Endothelial cell of umbilical vein (primary cell): ENCODE measurements at regions of chr14 and their contacts with region 1.

Region 1: DNA sequence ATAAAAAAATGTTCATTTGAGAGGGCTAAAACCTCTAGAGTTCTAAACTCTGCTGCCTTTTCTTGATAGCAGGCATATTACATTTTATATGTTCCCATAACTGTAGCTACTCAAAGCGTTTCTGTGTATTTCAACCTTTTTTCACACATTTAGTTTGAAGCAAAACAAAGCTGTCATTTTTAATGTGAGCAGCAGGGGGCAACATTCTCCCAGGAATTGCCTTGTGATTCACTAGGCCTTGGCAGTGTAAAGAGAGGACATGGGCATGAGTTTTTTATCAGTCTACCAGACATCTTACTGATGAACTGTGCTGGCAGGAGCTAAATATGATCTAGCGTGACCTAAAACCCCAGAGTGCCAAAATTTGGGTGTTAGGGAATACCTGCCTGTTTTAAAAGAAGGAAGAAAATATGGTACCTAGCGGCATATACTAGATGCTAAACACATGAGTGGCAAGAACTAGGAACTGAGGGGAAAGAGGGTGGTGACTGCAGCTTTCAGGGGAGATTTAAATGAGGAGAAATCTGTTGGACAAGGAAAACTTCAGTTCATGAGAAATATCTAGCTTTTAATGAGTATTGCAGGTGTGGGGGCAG is 65.3 kb downstream of the IFT43 start:
- DNase-seq: peak; percentile 72
- H3K4me3 ChIP-seq: no peak overlapping the region
- H3K27ac ChIP-seq: no peak overlapping the region
- H3K4me1 ChIP-seq: no peaks in the 10 kb centered on the region
- H3K27me3 ChIP-seq: no peaks in the 10 kb centered on the region
- CTCF ChIP-seq: peak; percentile 51 to 69
- POLR2A ChIP-seq: no peak

Region 2: GRCh38 chr14:76040704-76041103 is 10.2 kb before region 1 on chr14:
- CTCF ChIA-PET with region 1: interaction called, 17 read pairs
- POLR2A ChIA-PET with region 1: no interaction called
- dilution Hi-C with region 1: no loop called
- intact Hi-C with region 1: no loop called
- DNase-seq: no peak
- H3K4me3 ChIP-seq: no peak overlapping the region
- H3K27ac ChIP-seq: no peak overlapping the region
- H3K4me1 ChIP-seq: no peaks in the 10 kb centered on the region
- H3K27me3 ChIP-seq: no peaks in the 10 kb centered on the region
- CTCF ChIP-seq: no peak
- POLR2A ChIP-seq: no peak

Region 3: GRCh38 chr14:76067536-76067935 is 16.6 kb after region 1 on chr14:
- CTCF ChIA-PET with region 1: interaction called, 15 read pairs
- POLR2A ChIA-PET with region 1: no interaction called
- dilution Hi-C with region 1: no loop called
- intact Hi-C with region 1: no loop called
- DNase-seq: no peak
- H3K4me3 ChIP-seq: no peak overlapping the region
- H3K27ac ChIP-seq: no peak overlapping the region
- H3K4me1 ChIP-seq: no peaks in the 10 kb centered on the region
- H3K27me3 ChIP-seq: no peaks in the 10 kb centered on the region
- CTCF ChIP-seq: no peak
- POLR2A ChIP-seq: no peak

Region 4: DNA sequence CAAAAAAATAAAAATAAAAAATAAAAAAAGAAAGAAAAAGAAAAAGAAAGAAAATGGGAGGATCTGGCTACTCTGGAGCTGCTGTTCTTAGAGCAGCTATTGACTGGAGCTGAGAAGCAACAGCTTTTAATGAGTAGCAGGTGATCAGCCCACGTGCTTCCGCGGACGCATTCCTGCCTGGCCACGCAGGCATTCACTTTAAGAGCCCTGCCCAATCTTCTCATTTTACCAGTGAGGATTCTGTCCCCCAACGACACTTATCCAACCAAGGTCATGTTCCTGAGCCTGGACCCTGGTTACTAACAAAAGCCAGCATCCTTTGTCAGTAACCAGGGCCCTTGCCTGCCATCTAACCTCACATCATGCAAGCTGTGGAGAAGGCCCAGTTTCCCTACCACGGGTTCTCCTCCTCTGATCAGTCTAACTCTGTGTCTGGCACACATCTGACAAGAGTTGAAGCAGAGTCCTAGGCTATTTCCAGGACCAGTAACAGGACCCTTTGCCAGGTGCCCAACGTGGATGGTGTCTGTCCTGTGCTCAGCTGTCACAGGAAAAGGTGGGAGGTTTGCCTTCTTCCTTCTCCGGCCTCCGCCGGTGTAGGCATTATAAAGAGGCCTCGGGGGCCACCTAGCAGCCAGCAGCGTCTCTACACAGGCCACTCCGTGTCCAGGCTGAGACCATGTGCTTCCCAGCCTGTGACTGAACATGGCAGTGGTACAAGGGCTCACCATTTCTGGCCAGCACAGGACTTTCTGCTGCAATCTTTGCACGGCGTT is 39.9 kb after region 1 on chr14:
- CTCF ChIA-PET with region 1: interaction called, 15 read pairs
- POLR2A ChIA-PET with region 1: no interaction called
- dilution Hi-C with region 1: no loop called
- intact Hi-C with region 1: loop called (anchors 2 kb)
- DNase-seq: peak; percentile 13
- H3K4me3 ChIP-seq: no peak overlapping the region
- H3K27ac ChIP-seq: no peak overlapping the region
- H3K4me1 ChIP-seq: no peaks in the 10 kb centered on the region
- H3K27me3 ChIP-seq: peaks cover 0 to 2% of the 10 kb centered on the region in 2 experiments
- CTCF ChIP-seq: peak; percentile 19 to 49
- POLR2A ChIP-seq: no peak

Region 5: DNA sequence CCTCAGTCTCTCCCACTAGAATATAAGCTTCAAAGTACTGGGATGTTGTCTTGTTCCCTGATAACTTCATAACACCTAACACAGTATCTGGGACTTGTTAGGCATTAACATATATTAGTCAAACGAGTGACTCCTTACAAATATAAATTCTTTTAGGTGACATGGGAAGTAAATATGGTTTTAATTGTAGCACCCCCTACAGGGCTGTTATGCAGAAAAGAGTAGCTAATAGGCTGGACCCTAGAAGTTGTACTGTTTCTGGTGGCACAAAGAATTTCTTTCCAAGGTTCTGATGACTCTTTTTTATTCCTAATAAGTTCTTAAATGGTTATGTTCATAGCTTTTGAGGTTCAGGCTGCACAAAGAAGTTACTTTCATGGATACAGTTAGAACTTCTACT is 130.7 kb after region 1 on chr14:
- CTCF ChIA-PET with region 1: interaction called, 13 read pairs
- POLR2A ChIA-PET with region 1: no interaction called
- dilution Hi-C with region 1: no loop called
- intact Hi-C with region 1: no loop called
- DNase-seq: peak; percentile 7
- H3K4me3 ChIP-seq: no peak overlapping the region
- H3K27ac ChIP-seq: no peak overlapping the region
- H3K4me1 ChIP-seq: no peaks in the 10 kb centered on the region
- H3K27me3 ChIP-seq: no peaks in the 10 kb centered on the region
- CTCF ChIP-seq: peak; percentile 8 to 21
- POLR2A ChIP-seq: no peak

Region 6: GRCh38 chr14:76203086-76204001 is 152.4 kb after region 1 on chr14:
- CTCF ChIA-PET with region 1: no interaction called
- POLR2A ChIA-PET with region 1: no interaction called
- dilution Hi-C with region 1: no loop called
- intact Hi-C with region 1: no loop called
- DNase-seq: peak; percentile 41
- H3K4me3 ChIP-seq: no peak overlapping the region
- H3K27ac ChIP-seq: no peak overlapping the region
- H3K4me1 ChIP-seq: peaks cover 3% of the 10 kb centered on the region
- H3K27me3 ChIP-seq: no peaks in the 10 kb centered on the region
- CTCF ChIP-seq: no peak
- POLR2A ChIP-seq: no peak

Region 7: DNA sequence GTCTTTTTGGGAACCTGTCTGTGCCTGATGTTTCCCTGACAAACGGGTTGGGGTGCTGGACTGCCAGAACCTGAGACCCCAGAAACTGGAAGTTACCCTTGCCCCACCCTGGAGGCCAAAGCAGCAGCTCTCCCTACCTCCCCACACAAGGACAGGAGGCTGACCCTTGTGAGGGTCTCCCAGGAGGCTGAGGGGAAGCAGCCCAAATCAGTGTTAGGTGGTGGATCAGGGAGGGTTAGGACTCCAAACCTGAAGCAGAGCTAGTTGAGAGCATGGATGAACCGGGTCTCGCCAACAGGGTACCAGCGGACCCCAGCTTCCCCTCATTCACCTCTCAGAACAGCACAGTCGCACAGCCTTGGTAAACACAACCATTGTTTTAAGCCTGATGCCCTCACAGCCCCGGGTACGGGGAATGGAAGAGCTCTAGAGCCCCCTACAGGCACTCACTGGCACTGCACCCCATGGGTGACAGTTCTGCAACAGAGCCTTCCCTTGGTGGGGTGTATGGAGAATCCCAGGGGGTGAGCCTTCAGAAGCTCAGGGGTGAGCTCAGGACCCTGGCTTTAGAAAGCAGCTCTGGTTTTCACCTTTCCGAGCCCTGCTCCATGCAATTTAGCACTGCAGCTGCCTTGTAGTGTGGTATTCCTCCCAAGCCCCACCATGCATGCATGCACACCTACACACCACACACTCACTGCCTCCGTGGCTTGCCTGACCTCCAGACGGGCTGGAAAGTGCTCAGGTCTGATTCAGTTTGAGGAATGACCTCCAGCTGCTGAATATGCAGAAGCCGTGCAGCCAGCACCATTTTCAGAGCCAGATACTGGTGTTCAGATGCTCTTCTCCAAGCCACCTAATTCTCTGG is 336.3 kb after region 1 on chr14:
- CTCF ChIA-PET with region 1: interaction called, 115 read pairs
- POLR2A ChIA-PET with region 1: no interaction called
- dilution Hi-C with region 1: no loop called
- intact Hi-C with region 1: loop called (anchors 1 kb)
- DNase-seq: peak; percentile 63
- H3K4me3 ChIP-seq: no peak overlapping the region
- H3K27ac ChIP-seq: no peak overlapping the region
- H3K4me1 ChIP-seq: no peaks in the 10 kb centered on the region
- H3K27me3 ChIP-seq: peaks cover 21 to 39% of the 10 kb centered on the region in 2 experiments
- CTCF ChIP-seq: peak; percentile 98
- POLR2A ChIP-seq: no peak

Region 8: GRCh38 chr14:76647697-76648298 is 596.9 kb after region 1 on chr14:
- CTCF ChIA-PET with region 1: interaction called, 34 read pairs
- POLR2A ChIA-PET with region 1: no interaction called
- dilution Hi-C with region 1: no loop called
- intact Hi-C with region 1: loop called (anchors 1 kb)
- DNase-seq: peak; percentile 47
- H3K4me3 ChIP-seq: no peak overlapping the region
- H3K27ac ChIP-seq: no peak overlapping the region
- H3K4me1 ChIP-seq: no peaks in the 10 kb centered on the region
- H3K27me3 ChIP-seq: peaks cover 0 to 2% of the 10 kb centered on the region in 2 experiments
- CTCF ChIP-seq: peak; percentile 81 to 87
- POLR2A ChIP-seq: no peak